Heart right ventricle (tissue), 16 donors: ENCODE measurements at regions of chr10 and their contacts with region 1.

Region 1: DNA sequence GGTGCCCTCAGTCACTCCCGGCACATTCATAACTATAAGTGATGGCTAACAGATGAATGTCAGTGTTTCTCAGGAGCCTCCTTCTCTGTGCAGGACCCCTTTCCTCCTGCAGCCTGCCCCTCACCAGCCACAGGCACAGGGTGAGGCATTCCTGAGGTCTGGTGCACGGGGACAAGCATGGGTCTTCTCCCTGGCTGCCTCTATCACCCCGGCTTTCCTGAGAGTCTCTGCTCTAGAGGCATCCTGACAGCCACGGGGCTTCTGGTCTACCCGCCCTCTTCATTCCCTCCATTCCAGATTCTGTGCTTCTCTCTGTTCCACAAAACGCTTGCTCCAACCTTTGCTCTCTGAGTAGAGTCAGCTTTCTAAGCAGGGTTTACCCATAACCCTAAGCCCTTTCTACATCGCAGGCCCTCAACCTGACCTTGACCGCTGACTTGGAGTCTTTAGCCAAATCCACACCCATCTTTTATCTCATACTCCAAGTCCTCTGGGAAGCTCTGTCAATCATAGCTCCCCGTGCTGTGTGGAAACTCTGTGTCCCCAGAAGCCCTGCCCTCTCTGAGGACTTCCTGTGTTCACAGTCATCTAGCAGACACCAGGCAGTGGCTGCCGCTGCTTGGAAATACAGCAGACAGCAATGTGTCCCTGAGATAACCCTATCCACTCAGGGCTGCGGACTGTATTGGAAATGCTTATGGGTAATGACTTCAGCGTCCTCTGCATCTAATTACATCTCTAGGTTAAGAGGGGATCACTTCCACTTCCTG is 159.0 kb downstream of the SFMBT2 start:
- DNase-seq: peak; percentile 53 to 57
- ATAC-seq: peak; percentile 65 to 99 (median 95)
- H3K4me3 ChIP-seq: no peak overlapping the region
- H3K27ac ChIP-seq: peak overlapping the region in 9 of 10 donors; percentile 30 to 72 (median 56)
- H3K4me1 ChIP-seq: peaks cover 0 to 19% (median 12%) of the 10 kb centered on the region in 9 donors
- H3K27me3 ChIP-seq: no peaks in the 10 kb centered on the region
- CTCF ChIP-seq: no peak

Region 2: DNA sequence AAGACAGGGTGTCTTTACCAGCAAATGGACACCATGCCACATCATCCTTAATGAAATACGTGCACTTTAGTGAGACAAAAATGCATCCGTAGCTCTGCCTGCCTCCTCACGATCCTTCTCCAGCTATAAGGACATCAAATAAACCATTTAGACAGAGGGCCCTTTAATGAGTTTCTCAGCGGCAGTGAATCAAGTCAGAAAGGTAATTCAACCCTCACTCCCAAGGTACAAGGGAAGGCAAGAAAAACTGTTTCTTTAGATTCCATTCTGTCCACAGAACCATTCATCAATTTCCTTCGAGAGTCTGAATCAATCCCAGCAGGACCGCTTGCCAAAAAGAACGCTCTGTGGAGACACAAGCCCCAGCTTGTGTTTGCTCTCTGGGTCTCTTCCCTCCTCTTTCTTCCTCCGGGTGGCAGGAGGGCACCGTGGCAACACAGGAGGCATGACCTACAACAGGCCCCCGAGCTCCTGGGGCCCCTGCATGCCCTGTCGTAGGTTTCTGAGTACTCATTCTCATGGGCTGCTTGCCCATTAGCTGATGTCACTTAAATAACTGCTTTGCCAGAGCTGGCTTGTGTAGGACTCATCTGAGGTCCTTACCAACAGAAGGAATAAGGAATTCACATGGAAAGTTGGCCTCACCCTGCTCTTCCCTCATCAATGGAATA is 374.0 kb before region 1 on chr10:
- intact Hi-C with region 1: no loop called
- DNase-seq: no peak
- ATAC-seq: peak in 2 of 8 donors; percentile 38 to 61
- H3K4me3 ChIP-seq: no peak overlapping the region
- H3K27ac ChIP-seq: no peak overlapping the region
- H3K4me1 ChIP-seq: no peaks in the 10 kb centered on the region
- H3K27me3 ChIP-seq: peaks cover 0 to 37% (median 11%) of the 10 kb centered on the region in 7 donors
- CTCF ChIP-seq: peak in 2 of 9 donors; percentile 11 to 17

Region 3: DNA sequence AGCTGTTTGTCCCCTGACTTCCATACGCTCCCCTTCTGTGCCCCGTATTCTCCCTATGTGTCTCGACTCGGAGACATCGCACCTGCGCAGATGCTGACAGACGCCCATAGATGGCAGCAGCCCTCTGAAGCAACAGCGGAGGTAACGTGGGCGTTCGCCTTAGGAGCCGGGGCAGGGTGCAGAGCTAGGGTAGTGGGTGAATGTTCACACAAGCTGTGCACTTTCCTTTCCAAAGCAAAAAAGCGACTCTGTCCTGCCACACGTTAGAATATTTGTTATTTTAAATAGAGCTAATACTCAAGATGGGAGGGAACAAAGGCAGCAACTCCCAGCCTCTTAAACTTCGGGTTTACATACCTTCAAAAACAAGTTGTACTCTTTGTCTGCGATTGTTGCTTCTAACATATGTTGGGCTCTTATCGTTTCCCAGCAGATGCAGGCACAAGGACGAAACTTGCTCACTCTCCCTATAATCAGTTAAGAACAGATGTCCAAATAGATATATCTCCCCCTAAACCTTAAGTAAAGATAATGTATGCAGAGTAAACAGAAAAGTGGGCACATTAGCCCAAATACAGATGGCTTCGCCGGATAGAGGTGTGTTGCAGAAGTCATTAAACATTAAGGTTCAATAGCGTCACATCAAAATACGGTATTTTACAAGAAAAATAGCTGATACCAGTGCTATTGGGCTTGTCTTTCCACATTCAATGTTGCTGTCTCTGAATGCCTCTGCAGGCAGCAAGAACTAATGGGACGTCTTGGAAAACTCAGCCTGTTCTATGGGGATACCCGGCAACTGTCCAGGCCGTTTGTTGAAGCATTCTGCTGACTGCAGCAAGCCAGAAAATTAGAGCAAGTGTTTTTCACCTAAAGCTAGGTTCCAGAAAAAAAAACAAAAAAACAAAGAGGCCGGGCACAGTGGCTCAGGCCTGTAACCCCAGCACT is 331.5 kb before region 1 on chr10:
- intact Hi-C with region 1: loop called in 2 of 10 experiments (anchors 5 to 10 kb)
- DNase-seq: peak; percentile 59 to 62
- ATAC-seq: peak; percentile 83 to 95 (median 90)
- H3K4me3 ChIP-seq: no peak overlapping the region
- H3K27ac ChIP-seq: peak overlapping the region in 1 of 10 donors; percentile 9
- H3K4me1 ChIP-seq: peaks cover 0 to 15% (median 5%) of the 10 kb centered on the region in 9 donors
- H3K27me3 ChIP-seq: peaks cover 0 to 3% (median 0%) of the 10 kb centered on the region in 7 donors
- CTCF ChIP-seq: peak; percentile 28 to 75 (median 65)

Region 4: DNA sequence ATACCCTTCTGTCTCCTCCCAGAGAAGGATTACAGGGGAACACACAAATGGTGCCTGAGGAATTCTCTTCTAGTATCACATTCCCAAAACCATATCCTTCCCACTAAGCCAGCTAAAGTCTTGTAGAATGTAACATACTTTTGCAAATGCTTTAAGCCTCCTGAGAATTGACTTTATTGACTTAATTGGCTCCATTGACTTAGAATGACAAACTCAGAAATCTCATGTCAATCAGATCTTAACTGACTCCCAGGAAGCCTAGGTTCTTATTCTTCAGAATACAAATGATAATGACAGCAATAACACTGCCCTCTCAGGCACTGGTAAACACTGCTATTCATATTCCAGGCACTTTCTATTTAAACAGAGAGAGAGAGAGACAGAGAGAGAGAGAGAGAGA is 314.9 kb before region 1 on chr10:
- intact Hi-C with region 1: no loop called
- DNase-seq: no peak
- ATAC-seq: no peak
- H3K4me3 ChIP-seq: no peak overlapping the region
- H3K27ac ChIP-seq: no peak overlapping the region
- H3K4me1 ChIP-seq: no peaks in the 10 kb centered on the region
- H3K27me3 ChIP-seq: peaks cover 0 to 5% (median 0%) of the 10 kb centered on the region in 7 donors
- CTCF ChIP-seq: no peak

Region 5: GRCh38 chr10:7218968-7219367 is 32.9 kb before region 1 on chr10:
- intact Hi-C with region 1: loop called in 1 of 10 experiments (anchors 5 kb)
- DNase-seq: no peak
- ATAC-seq: peak; percentile 71 to 96 (median 89)
- H3K4me3 ChIP-seq: no peak overlapping the region
- H3K27ac ChIP-seq: peak overlapping the region in 7 of 10 donors; percentile 15 to 65 (median 39)
- H3K4me1 ChIP-seq: peaks cover 0 to 19% (median 8%) of the 10 kb centered on the region in 9 donors
- H3K27me3 ChIP-seq: no peaks in the 10 kb centered on the region
- CTCF ChIP-seq: peak in 6 of 9 donors; percentile 12 to 53 (median 39)

Region 6: GRCh38 chr10:7458556-7458955 is 206.7 kb after region 1 on chr10:
- intact Hi-C with region 1: no loop called
- DNase-seq: no peak
- ATAC-seq: no peak
- H3K4me3 ChIP-seq: no peak overlapping the region
- H3K27ac ChIP-seq: peak overlapping the region in 1 of 10 donors; percentile 72
- H3K4me1 ChIP-seq: peaks cover 0 to 17% (median 0%) of the 10 kb centered on the region in 9 donors
- H3K27me3 ChIP-seq: peaks cover 0 to 7% (median 0%) of the 10 kb centered on the region in 7 donors
- CTCF ChIP-seq: no peak